ENCODE measurements at regions of chr3 and their contacts with region 1.

Region 1: DNA sequence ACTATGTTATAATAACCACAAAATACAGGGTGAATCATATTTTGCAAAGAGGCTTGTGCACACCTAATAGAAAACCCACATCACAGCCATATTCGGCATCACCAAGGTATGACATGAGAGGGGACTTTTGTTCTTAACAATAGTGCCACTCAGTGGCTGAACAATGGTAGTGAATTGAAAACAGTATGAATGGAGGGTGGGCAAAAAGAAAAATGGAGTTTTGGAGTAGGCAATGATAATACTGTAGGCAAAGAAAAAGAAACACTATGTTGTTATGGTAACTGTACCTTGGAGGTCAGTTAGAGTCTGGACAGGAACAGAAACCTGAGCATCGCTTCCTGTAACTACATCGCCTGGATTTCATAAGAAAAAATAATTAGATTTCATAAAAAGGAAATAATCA is 348.6 kb downstream of the PLCL2 start:
- DNase-seq: peak; percentile 28
- CTCF ChIP-seq: peak; percentile 60

Region 2: DNA sequence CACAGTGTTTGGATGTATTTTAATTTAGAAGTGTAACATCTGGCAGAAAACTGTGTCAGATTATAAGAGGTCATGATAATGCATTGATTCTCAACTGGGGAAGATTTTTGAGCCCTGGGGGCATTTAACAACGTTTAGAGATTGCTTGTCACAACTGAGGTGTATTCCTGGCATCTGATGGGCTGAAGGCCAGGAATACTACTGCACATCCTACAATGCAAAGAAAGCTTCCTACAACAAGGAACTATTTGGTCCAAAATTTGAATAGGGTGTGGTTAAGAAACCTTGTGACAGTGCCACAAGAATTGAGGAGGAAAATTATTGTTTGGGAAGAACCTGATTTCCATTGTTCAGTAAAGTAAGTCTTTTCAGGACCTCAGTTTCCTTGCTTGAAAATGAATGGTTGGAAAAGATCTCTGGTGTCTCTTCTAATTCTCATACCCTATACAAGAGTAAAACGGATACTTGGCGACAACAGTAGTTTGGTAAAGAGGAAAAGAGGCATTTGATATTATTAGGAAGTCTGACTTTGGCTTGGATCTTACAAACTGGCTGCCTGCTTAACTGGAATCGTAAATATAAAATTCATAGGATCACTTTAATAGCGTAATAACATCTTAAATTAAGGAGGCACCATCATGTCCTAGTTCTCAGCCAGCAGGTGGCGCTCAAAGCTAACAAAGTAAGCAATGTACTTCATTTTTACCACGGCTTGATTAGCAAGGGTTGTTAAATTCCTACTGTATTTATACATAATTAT is 632.4 kb before region 1 on chr3:
- CTCF ChIA-PET with region 1: interaction called, 37 read pairs
- POLR2A ChIA-PET with region 1: no interaction called
- DNase-seq: peak; percentile 56
- CTCF ChIP-seq: peak; percentile 78

Region 3: GRCh38 chr3:17266846-17267245 is 33.4 kb after region 1 on chr3:
- CTCF ChIA-PET with region 1: no interaction called
- POLR2A ChIA-PET with region 1: no interaction called
- DNase-seq: no peak
- CTCF ChIP-seq: no peak

Measured in GM10248 (cell line).